K562 (cell line): ENCODE measurements at regions of chr1 and their contacts with region 1.

Region 1: DNA sequence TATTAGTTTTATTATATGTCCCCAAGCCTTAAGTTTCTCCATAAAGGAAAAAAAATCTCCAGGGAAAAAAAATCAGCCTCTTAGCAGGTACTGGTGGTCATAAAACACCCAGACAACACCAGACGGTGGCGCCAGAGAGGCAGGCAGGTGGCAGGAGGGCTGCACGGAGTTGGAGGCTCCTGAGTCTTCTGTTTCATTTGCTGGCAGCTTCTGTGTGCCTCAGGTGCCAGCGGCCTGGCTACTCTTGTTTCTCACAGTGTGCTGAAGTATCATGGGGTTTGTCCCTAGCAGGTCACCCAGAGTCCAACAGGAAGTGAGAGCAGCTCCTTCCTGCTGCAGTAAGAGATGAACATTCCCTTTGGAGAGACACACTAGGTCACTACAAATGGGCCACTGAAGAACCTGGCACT is 123.3 kb upstream of the GADD45A start:
- DNase-seq: peak; percentile 78 to 92 (median 80)
- ATAC-seq: peak; percentile 91
- H3K4me3 ChIP-seq: no peak overlapping the region
- H3K27ac ChIP-seq: no peak overlapping the region
- H3K4me1 ChIP-seq: peaks cover 28 to 31% of the 10 kb centered on the region in 2 experiments; a peak in 4 of 5 replicates
- H3K27me3 ChIP-seq: no peaks in the 10 kb centered on the region
- CTCF ChIP-seq: peak; percentile 91 to 93 (median 91)
- EP300 ChIP-seq: no peak
- POLR2A ChIP-seq: no peak
- RAD21 ChIP-seq: peak; percentile 92

Region 2: GRCh38 chr1:67760030-67760821 is 198.5 kb after region 1 on chr1:
- CTCF ChIA-PET with region 1: interaction called, 37 read pairs
- POLR2A ChIA-PET with region 1: interaction called, 4 read pairs
- in situ Hi-C with region 1: no loop called
- intact Hi-C with region 1: loop called (anchors 1 kb)
- DNase-seq: peak; percentile 75 to 84 (median 76)
- ATAC-seq: peak; percentile 89
- H3K4me3 ChIP-seq: no peak overlapping the region
- H3K27ac ChIP-seq: peak overlapping the region; percentile 52
- H3K4me1 ChIP-seq: peaks cover 3 to 18% of the 10 kb centered on the region in 2 experiments; a peak in 4 of 5 replicates
- H3K27me3 ChIP-seq: no peaks in the 10 kb centered on the region
- CTCF ChIP-seq: peak; percentile 76 to 92 (median 84)
- EP300 ChIP-seq: 0 out of 2 replicates have a peak, but pooled peaks have one; percentile 14
- POLR2A ChIP-seq: no peak
- RAD21 ChIP-seq: peak; percentile 90 to 98

Region 3: DNA sequence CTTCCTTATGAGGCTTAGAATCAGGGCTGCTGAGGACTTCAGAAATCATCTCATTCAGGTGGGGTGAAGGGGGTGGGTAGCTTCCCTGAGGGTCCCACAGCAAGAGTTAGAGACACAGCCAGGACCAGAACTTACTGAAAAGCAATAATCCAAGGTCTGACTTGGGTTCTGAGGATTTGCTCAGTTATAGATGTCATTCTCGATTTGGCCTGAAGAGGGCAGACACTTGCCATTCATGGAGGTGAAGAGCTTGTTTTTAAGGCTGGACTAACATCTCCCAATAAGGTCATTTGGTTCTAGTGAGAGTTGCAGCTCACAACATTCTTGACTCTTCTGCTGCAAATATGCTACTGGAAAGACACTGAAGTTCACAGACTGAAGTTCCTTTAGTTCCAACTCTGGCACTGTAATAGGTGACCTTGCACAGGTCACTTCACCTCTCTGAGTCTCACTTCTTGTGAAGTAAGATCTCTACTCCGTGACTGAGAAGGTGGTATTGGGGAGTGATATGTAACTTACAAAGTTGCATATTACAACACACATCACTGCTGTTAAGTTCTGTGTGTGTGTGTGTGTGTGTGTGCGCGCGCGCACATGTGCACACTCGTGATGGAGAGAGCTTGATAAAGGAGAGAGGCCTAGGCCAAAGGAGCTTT is 558.6 kb after region 1 on chr1:
- CTCF ChIA-PET with region 1: no interaction called
- POLR2A ChIA-PET with region 1: no interaction called
- in situ Hi-C with region 1: no loop called
- intact Hi-C with region 1: no loop called
- DNase-seq: peak; percentile 55 to 70 (median 66)
- ATAC-seq: peak; percentile 85
- H3K4me3 ChIP-seq: no peak overlapping the region
- H3K27ac ChIP-seq: no peak overlapping the region
- H3K4me1 ChIP-seq: no peaks in the 10 kb centered on the region
- H3K27me3 ChIP-seq: 0 out of 5 replicates have a peak, but pooled peaks cover 0 to 4% of the 10 kb centered on the region in 2 experiments
- CTCF ChIP-seq: peak; percentile 63 to 85 (median 80)
- EP300 ChIP-seq: no peak
- POLR2A ChIP-seq: no peak
- RAD21 ChIP-seq: peak; percentile 82 to 88